ENCODE measurements at regions of chr20 and their contacts with region 1.

Region 1: DNA sequence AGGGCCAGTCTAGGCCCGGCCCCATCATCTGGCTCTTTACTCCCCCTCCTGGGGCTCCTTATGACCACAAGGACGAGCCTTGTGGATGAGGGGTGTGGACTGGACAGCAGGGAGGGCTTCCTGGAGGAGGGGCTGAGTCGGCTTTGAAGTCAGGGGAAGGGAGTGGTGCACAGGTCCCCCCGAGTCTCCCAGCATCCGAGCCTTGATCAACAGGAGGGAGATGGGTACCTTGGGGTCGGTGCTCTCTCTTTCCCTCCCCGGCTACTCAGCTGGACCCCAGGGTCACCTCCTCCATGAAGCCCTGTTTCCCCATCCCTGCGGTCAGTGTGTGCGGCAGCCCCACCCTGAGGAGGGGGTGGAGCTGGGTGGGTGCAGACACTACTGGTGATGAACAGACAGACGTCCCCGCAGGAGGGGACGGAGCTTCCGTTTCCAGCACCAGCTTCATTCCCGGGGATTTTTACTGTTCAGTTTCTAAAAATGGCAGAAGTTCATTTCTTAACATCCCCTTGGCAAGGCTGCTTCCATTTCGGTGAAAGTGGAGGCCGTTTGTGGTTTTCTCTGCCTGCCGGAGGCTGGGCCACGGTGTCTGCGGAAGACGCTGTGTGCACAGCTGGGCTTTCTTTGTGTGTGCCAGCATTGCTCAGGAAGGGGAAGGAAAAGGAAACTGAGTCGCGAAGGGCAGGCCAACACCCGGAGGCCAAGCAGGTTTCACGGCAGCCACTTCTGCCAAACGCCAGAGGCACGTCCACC is 19.6 kb downstream of the NTSR1 start:
- DNase-seq: peak; percentile 82 to 91 (median 88)
- H3K4me3 ChIP-seq: peak overlapping the region in 2 of 3 experiments; percentile 30 to 52
- H3K4me3 Mint-ChIP-seq: peak overlapping the region; percentile 78 to 85
- H3K27ac ChIP-seq: peak overlapping the region; percentile 57 to 89
- H3K27ac Mint-ChIP-seq: peak overlapping the region; percentile 94 to 98 (median 94)
- H3K4me1 ChIP-seq: peaks cover 42 to 74% of the 10 kb centered on the region in 2 donors
- H3K4me1 Mint-ChIP-seq: peaks cover 67% of the 10 kb centered on the region
- H3K27me3 ChIP-seq: no peaks in the 10 kb centered on the region
- H3K27me3 Mint-ChIP-seq: peaks cover 1 to 2% (median 2%) of the 10 kb centered on the region in 3 donors
- CTCF ChIP-seq: no peak

Region 2: GRCh38 chr20:62740286-62741141 is 12.3 kb after region 1 on chr20:
- intact Hi-C with region 1: loop called in 1 of 2 experiments (anchors 1 kb)
- DNase-seq: peak; percentile 92 to 99 (median 96)
- H3K4me3 ChIP-seq: peak overlapping the region in 2 of 3 experiments; percentile 10 to 72
- H3K4me3 Mint-ChIP-seq: peak overlapping the region; percentile 68 to 77
- H3K27ac ChIP-seq: peak overlapping the region; percentile 93 to 99
- H3K27ac Mint-ChIP-seq: peak overlapping the region; percentile 94 to 99 (median 97)
- H3K4me1 ChIP-seq: peaks cover 41 to 65% of the 10 kb centered on the region in 2 donors
- H3K4me1 Mint-ChIP-seq: peaks cover 57% of the 10 kb centered on the region
- H3K27me3 ChIP-seq: no peaks in the 10 kb centered on the region
- H3K27me3 Mint-ChIP-seq: peaks cover 1 to 7% (median 2%) of the 10 kb centered on the region in 3 donors
- CTCF ChIP-seq: no peak

Region 3: DNA sequence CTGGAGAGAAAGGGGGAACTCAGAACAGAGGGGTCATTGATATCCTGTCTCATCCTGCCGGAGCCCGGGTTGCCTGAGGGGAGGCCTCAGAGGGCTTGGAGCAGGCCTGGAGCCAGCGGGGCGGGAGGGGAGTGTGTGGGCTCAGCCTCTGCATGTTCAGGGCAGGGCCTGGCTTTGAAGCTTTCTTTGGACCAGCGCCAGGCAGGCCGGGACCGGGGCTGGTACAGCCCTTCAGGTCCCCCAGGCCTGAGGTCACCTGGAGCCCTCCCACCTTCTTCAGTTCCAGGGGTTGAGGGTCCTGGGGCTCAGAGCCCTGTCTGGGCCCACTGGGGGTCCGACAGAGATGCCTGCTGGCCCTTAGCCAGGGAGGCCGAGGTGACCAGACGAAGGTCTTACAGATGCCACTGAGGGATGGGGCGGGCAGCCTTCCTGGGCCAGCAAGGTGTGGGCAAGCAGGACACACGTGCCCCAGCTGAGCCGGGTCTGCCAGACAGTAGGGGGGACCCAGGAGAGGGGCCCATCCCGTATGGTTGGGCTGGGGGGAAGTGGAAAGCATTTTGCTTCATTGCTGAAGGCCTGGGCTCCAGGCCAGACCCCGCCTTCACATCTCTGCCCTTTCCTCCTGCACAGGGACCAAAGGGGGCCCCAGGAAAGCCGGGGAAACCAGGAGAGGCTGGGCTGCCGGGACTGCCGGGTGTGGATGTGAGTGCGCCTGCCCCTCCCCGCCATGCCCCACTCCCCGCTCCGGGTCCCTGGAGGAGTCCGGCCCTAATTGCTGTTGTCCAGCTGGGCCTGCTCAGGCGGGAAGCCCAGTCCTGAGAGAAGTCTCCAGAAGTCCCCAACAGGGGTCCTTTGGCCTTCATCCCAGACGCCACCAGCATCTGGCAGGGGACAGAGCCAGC is 90.6 kb after region 1 on chr20:
- intact Hi-C with region 1: no loop called
- DNase-seq: no peak
- H3K4me3 ChIP-seq: no peak overlapping the region
- H3K4me3 Mint-ChIP-seq: peak overlapping the region in 1 of 2 donors; percentile 76
- H3K27ac ChIP-seq: no peak overlapping the region
- H3K27ac Mint-ChIP-seq: no peak overlapping the region
- H3K4me1 ChIP-seq: peaks cover 14 to 36% of the 10 kb centered on the region in 2 donors
- H3K4me1 Mint-ChIP-seq: peaks cover 19% of the 10 kb centered on the region
- H3K27me3 ChIP-seq: peaks cover 19 to 53% of the 10 kb centered on the region in 2 donors
- H3K27me3 Mint-ChIP-seq: peaks cover 49 to 65% (median 54%) of the 10 kb centered on the region in 3 donors
- CTCF ChIP-seq: no peak